Natural killer cell (primary cell): ENCODE measurements at regions of chr21 and their contacts with region 1.

Region 1: GRCh38 chr21:45439161-45439872 is 34.4 kb downstream of the COL18A1 start:
- DNase-seq: peak; percentile 84 to 92
- ATAC-seq: peak; percentile 88 to 92 (median 90)
- H3K4me3 ChIP-seq: no peak overlapping the region
- H3K4me3 Mint-ChIP-seq: peak overlapping the region; percentile 78
- H3K27ac ChIP-seq: no peak overlapping the region
- H3K27ac Mint-ChIP-seq: peak overlapping the region; percentile 45 to 57
- H3K4me1 ChIP-seq: peaks cover 9% of the 10 kb centered on the region
- H3K4me1 Mint-ChIP-seq: peaks cover 8 to 15% of the 10 kb centered on the region in 2 donors
- H3K27me3 ChIP-seq: no peaks in the 10 kb centered on the region
- H3K27me3 Mint-ChIP-seq: peaks cover 4 to 12% of the 10 kb centered on the region in 2 donors
- CTCF ChIP-seq: peak; percentile 94

Region 2: DNA sequence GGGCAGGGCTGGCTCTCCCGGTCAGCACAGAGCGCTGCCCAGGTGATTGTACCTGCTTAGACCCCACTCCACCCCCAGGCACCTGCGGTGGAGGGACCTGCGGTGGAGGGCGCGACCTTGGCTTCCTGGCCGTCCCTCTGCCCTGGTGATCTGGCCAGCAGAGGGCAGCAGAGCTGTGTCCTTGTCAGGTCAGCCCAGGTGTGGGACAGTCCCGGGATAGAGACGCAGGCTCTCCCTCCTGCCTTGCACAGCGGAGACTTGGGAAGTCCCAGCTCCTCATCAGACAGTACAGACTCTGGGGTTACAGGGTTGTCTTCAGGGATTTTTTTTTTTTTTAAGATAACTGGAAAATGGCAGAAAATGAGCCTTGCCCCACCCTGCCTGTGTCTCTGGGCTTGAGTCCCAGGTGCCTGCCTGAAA is 489.5 kb before region 1 on chr21:
- intact Hi-C with region 1: loop called (anchors 5 kb)
- DNase-seq: peak; percentile 79 to 90
- ATAC-seq: peak; percentile 85 to 95 (median 94)
- H3K4me3 ChIP-seq: no peak overlapping the region
- H3K4me3 Mint-ChIP-seq: no peak overlapping the region
- H3K27ac ChIP-seq: no peak overlapping the region
- H3K27ac Mint-ChIP-seq: no peak overlapping the region
- H3K4me1 ChIP-seq: peaks cover 19% of the 10 kb centered on the region
- H3K4me1 Mint-ChIP-seq: peaks cover 4 to 15% of the 10 kb centered on the region in 2 donors
- H3K27me3 ChIP-seq: no peaks in the 10 kb centered on the region
- H3K27me3 Mint-ChIP-seq: no peaks in the 10 kb centered on the region
- CTCF ChIP-seq: peak; percentile 92

Region 3: DNA sequence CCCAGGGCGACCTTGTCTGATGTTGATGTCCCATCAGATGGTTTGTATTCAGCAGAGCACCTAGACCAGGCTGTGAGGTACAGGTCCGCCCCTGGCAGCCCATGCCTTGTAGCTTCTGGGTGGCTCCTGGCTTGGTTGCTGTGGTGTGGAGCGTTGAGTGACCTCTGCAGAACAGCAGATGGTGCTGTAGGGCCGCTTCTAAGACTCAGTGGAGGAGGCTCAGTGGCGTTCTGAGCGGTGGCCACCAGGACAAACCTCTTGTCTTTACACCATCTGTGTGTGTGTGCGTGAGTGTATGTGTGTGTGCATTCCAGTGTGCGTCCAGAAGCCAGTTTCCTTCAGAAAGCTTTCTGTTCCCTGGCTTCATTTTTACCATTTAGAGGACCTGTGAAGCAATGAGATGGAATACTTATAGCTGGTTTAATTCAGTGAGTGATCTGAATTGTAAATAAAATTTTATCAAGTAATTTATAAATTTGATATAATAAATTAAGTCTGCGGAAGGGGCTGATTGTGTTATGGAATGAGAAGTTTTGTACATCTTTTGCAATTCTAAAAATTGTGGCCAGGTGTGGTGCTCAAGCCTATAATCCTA is 298.9 kb before region 1 on chr21:
- intact Hi-C with region 1: loop called (anchors 1 kb)
- DNase-seq: peak; percentile 61 to 80
- ATAC-seq: peak; percentile 93 to 98 (median 98)
- H3K4me3 ChIP-seq: no peak overlapping the region
- H3K4me3 Mint-ChIP-seq: no peak overlapping the region
- H3K27ac ChIP-seq: no peak overlapping the region
- H3K27ac Mint-ChIP-seq: peak overlapping the region in 1 of 2 donors; percentile 42
- H3K4me1 ChIP-seq: peaks cover 5% of the 10 kb centered on the region
- H3K4me1 Mint-ChIP-seq: peaks cover 6 to 9% of the 10 kb centered on the region in 2 donors
- H3K27me3 ChIP-seq: no peaks in the 10 kb centered on the region
- H3K27me3 Mint-ChIP-seq: peaks cover 0 to 2% of the 10 kb centered on the region in 2 donors
- CTCF ChIP-seq: peak; percentile 69

Region 4: GRCh38 chr21:45248893-45249381 is 190.4 kb before region 1 on chr21:
- intact Hi-C with region 1: no loop called
- DNase-seq: no peak
- ATAC-seq: no peak
- H3K4me3 ChIP-seq: no peak overlapping the region
- H3K4me3 Mint-ChIP-seq: no peak overlapping the region
- H3K27ac ChIP-seq: no peak overlapping the region
- H3K27ac Mint-ChIP-seq: no peak overlapping the region
- H3K4me1 ChIP-seq: no peaks in the 10 kb centered on the region
- H3K4me1 Mint-ChIP-seq: no peaks in the 10 kb centered on the region
- H3K27me3 ChIP-seq: peaks cover 3% of the 10 kb centered on the region
- H3K27me3 Mint-ChIP-seq: peaks cover 32% of the 10 kb centered on the region in 2 donors
- CTCF ChIP-seq: no peak

Region 5: GRCh38 chr21:45570826-45571601 is 131.7 kb after region 1 on chr21:
- intact Hi-C with region 1: no loop called
- DNase-seq: no peak
- ATAC-seq: no peak
- H3K4me3 ChIP-seq: no peak overlapping the region
- H3K4me3 Mint-ChIP-seq: no peak overlapping the region
- H3K27ac ChIP-seq: no peak overlapping the region
- H3K27ac Mint-ChIP-seq: no peak overlapping the region
- H3K4me1 ChIP-seq: no peaks in the 10 kb centered on the region
- H3K4me1 Mint-ChIP-seq: peaks cover 0 to 5% of the 10 kb centered on the region in 2 donors
- H3K27me3 ChIP-seq: no peaks in the 10 kb centered on the region
- H3K27me3 Mint-ChIP-seq: peaks cover 0 to 16% of the 10 kb centered on the region in 2 donors
- CTCF ChIP-seq: no peak